Aorta (tissue), 5 donors: ENCODE measurements at regions of chr1 and their contacts with region 1.

Region 1: DNA sequence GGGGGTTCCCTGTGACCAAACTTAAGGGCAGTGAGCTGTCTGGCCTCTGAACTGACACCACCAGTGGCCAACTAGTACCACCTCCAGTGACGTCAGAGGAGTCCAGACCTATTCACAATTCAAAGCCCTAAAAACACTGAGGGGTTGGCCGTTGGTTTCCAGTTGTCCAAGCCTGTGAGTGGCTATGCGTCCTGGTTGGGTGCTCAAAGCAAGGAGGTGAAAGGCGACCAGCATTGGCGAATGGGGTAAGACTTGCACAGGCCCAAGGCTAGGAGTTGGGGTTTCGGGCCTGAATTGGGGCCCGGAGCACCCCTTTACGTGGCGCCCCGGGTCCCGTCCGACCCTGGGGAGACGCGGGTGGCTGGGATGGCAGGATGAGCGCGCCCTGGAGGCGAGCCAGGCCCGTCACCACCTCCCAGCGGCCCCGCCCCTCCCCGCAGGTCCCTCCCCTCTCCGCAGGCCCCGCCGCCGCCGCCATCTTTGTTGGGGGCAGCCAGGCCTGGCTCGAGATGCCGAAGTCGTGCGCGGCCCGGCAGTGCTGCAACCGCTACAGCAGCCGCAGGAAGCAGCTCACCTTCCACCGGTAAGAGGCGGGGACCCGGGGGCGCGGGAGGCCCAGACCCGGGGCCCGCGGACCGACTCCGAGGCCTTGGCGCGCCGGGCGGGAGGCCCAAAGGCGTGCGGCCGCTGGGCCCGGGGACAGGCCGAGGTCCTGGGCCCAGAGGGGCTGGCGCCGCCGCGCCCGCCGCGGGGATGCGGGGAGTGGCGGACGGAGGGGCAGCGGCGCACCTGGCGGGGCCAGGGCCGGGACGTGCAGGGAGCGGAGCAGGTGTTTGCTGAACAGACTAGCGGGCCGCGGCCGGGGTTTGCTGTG is at the start of gene THAP3:
- DNase-seq: peak; percentile 93 to 97
- ATAC-seq: peak; percentile 93
- H3K4me3 ChIP-seq: peak within 1 kb of the TSS; percentile 86 to 89
- H3K27ac ChIP-seq: peak within 1 kb of the TSS in 1 of 2 donors; percentile 85
- H3K4me1 ChIP-seq: no peaks in the 10 kb centered on the region
- H3K27me3 ChIP-seq: no peaks in the 10 kb centered on the region
- total RNA-seq, gene THAP3: 11.0 to 21.2 TPM

Region 2: GRCh38 chr1:6579374-6580118 is 45.4 kb before region 1 on chr1 and contains the start of gene ZBTB48:
- intact Hi-C with region 1: loop called in 1 of 2 experiments (anchors 5 kb)
- DNase-seq: peak; percentile 100
- ATAC-seq: peak; percentile 98
- H3K4me3 ChIP-seq: peak within 1 kb of the TSS; percentile 19 to 64
- H3K27ac ChIP-seq: peak within 1 kb of the TSS in 1 of 2 donors; percentile 86
- H3K4me1 ChIP-seq: no peaks in the 10 kb centered on the region
- H3K27me3 ChIP-seq: no peaks in the 10 kb centered on the region
- total RNA-seq, gene ZBTB48: 20.6 to 29.9 TPM

Region 3: GRCh38 chr1:6591222-6591621 is 33.7 kb before region 1 on chr1:
- intact Hi-C with region 1: loop called in 1 of 2 experiments (anchors 5 kb)
- DNase-seq: peak; percentile 83 to 86
- ATAC-seq: peak; percentile 75
- H3K4me3 ChIP-seq: no peak overlapping the region
- H3K27ac ChIP-seq: peak overlapping the region; percentile 39 to 70
- H3K4me1 ChIP-seq: peaks cover 0 to 4% of the 10 kb centered on the region in 2 donors
- H3K27me3 ChIP-seq: no peaks in the 10 kb centered on the region